OCI-LY7 (cell line): ENCODE measurements at regions of chr11 and their contacts with region 1.

Region 1: DNA sequence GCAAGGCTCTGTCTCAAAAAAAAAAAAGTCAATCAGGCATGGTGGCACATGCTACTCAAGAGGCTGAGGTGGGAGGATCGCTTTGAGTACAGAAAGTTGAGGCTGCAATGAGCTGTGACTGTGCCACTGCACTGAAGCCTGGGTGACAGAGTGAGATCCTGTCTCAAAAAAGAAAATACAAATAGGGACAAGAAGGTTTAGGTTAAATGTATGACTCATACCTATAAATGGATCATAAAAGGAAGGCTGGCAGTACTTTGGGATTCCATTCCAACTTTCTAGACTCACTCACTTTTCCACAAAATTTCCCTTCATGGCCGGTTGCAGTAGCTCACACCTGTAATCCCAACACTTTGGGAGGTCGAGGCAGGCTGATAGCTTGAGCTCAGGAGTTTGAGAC is 25.6 kb upstream of the OSBP start:
- DNase-seq: no peak
- H3K4me3 ChIP-seq: no peak overlapping the region
- H3K27ac ChIP-seq: no peak overlapping the region
- H3K4me1 ChIP-seq: no peaks in the 10 kb centered on the region
- CTCF ChIP-seq: no peak

Region 2: DNA sequence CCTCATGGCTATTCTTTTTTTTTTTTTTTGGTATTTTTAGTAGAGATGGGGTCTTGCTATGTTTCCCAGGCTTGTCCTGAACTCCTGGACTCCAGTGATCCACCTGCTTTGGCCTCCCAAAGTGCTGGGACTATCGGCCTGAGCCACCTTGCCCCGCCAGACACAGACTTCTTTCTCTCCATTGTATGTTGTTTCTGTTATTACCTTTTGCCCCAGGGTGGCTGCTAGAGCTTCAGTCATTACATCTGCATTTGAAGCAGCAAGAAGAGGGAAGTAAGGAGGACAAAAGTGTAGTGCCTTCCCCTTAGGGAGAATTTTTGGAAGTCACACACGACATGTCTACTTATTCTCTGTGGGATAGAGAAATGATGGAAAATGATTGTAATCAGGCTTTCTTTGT is 15.5 kb before region 1 on chr11:
- CTCF ChIA-PET with region 1: no interaction called
- POLR2A ChIA-PET with region 1: interaction called, 8 read pairs
- intact Hi-C with region 1: loop called (anchors 1 kb)
- DNase-seq: no peak
- H3K4me3 ChIP-seq: no peak overlapping the region
- H3K27ac ChIP-seq: no peak overlapping the region
- H3K4me1 ChIP-seq: no peaks in the 10 kb centered on the region
- CTCF ChIP-seq: no peak